ENCODE measurements at regions of chr3 and their contacts with region 1.

Region 1: GRCh38 chr3:40580494-40581091 is 55.8 kb downstream of the ZNF621 start:
- DNase-seq: peak; percentile 64
- H3K4me3 ChIP-seq: no peak overlapping the region
- H3K27ac ChIP-seq: no peak overlapping the region
- H3K27me3 ChIP-seq: no peaks in the 10 kb centered on the region
- CTCF ChIP-seq: peak; percentile 98

Region 2: GRCh38 chr3:41148478-41148877 is 567.9 kb after region 1 on chr3:
- in situ Hi-C with region 1: no loop called
- DNase-seq: no peak
- H3K4me3 ChIP-seq: no peak overlapping the region
- H3K27ac ChIP-seq: no peak overlapping the region
- H3K27me3 ChIP-seq: no peaks in the 10 kb centered on the region
- CTCF ChIP-seq: no peak

Region 3: GRCh38 chr3:41247055-41248004 is 666.7 kb after region 1 on chr3:
- in situ Hi-C with region 1: loop called (anchors 25 kb)
- DNase-seq: no peak
- H3K4me3 ChIP-seq: no peak overlapping the region
- H3K27ac ChIP-seq: no peak overlapping the region
- H3K27me3 ChIP-seq: no peaks in the 10 kb centered on the region
- CTCF ChIP-seq: no peak